ENCODE measurements at regions of chr15 and their contacts with region 1.

Region 1: DNA sequence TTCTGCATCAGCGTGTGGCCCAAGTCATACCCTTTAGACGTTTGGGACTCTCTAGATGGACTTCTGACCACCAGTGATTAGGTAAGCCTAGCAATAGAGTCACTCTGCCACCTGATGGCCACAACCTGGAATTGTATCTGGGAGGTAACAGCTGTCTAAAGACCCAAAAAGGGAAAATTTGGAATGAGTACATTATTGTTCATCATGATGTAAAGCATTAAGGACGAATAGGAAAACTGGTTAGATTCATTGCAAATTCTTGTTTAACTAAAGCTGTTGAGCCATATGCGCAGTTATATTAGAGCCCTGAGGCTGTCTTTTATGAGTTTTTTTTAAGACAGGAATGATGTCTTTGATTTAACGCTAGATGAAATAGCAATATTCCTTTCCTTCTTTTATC is 63.6 kb downstream of the FAM81A start:
- DNase-seq: no peak
- ATAC-seq: peak; percentile 89
- H3K4me3 ChIP-seq: no peak overlapping the region
- H3K27ac ChIP-seq: no peak overlapping the region
- H3K4me1 ChIP-seq: no peaks in the 10 kb centered on the region
- H3K27me3 ChIP-seq: no peaks in the 10 kb centered on the region
- CTCF ChIP-seq: peak; percentile 80 to 84 (median 81)
- EP300 ChIP-seq: no peak
- POLR2A ChIP-seq: no peak
- RAD21 ChIP-seq: peak; percentile 91

Region 2: GRCh38 chr15:58852347-58852746 is 649.2 kb before region 1 on chr15:
- CTCF ChIA-PET with region 1: no interaction called
- POLR2A ChIA-PET with region 1: no interaction called
- RAD21 ChIA-PET with region 1: no interaction called
- SMC1A ChIA-PET with region 1: no interaction called
- in situ Hi-C with region 1: no loop called
- intact Hi-C with region 1: no loop called
- DNase-seq: no peak
- ATAC-seq: no peak
- H3K4me3 ChIP-seq: no peak overlapping the region
- H3K27ac ChIP-seq: no peak overlapping the region
- H3K4me1 ChIP-seq: no peaks in the 10 kb centered on the region
- H3K27me3 ChIP-seq: no peaks in the 10 kb centered on the region
- CTCF ChIP-seq: no peak
- EP300 ChIP-seq: no peak
- POLR2A ChIP-seq: no peak
- RAD21 ChIP-seq: no peak

Region 3: GRCh38 chr15:58957101-58957973 is 544.3 kb before region 1 on chr15:
- CTCF ChIA-PET with region 1: interaction called, 25 read pairs
- POLR2A ChIA-PET with region 1: no interaction called
- RAD21 ChIA-PET with region 1: interaction called, 4 read pairs
- SMC1A ChIA-PET with region 1: interaction called, 12 read pairs
- in situ Hi-C with region 1: no loop called
- intact Hi-C with region 1: no loop called
- DNase-seq: no peak
- ATAC-seq: peak; percentile 98
- H3K4me3 ChIP-seq: no peak overlapping the region
- H3K27ac ChIP-seq: no peak overlapping the region
- H3K4me1 ChIP-seq: peaks cover 11% of the 10 kb centered on the region
- H3K27me3 ChIP-seq: no peaks in the 10 kb centered on the region
- CTCF ChIP-seq: peak; percentile 79 to 87 (median 81)
- EP300 ChIP-seq: no peak
- POLR2A ChIP-seq: no peak
- RAD21 ChIP-seq: peak; percentile 82

Region 4: GRCh38 chr15:59516655-59517461 is 15.3 kb after region 1 on chr15:
- CTCF ChIA-PET with region 1: interaction called, 40 read pairs
- POLR2A ChIA-PET with region 1: interaction called, 3 read pairs
- RAD21 ChIA-PET with region 1: interaction called, 15 read pairs
- SMC1A ChIA-PET with region 1: interaction called, 27 read pairs
- in situ Hi-C with region 1: no loop called
- intact Hi-C with region 1: no loop called
- DNase-seq: no peak
- ATAC-seq: peak; percentile 83
- H3K4me3 ChIP-seq: peak overlapping the region; percentile 35
- H3K27ac ChIP-seq: peak overlapping the region; percentile 93
- H3K4me1 ChIP-seq: peaks cover 27% of the 10 kb centered on the region
- H3K27me3 ChIP-seq: no peaks in the 10 kb centered on the region
- CTCF ChIP-seq: no peak
- EP300 ChIP-seq: no peak
- POLR2A ChIP-seq: no peak
- RAD21 ChIP-seq: no peak

Region 5: DNA sequence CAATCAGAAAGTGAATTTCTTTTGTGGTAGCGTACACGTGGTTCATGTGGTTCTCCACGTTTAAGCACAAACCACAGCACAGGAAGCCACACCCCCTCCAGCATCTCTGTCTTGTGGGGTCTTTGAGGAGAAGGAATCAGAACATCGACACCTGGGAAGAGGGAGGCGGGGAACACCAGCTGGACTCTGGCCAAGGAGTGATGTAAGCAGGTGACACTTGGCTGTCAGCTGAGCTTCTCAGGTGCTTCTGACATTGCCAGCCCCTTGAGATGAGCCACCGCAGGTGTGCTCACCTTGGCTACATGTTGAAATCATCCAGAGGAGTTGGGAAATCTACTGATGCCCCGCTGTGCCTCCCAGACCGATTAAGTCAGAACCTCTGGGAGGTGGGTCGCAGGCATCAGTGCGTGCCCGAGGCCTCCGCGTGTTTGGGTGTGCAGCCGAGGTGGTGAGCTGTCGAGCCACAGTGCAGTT is 21.4 kb after region 1 on chr15:
- CTCF ChIA-PET with region 1: interaction called, 58 read pairs
- POLR2A ChIA-PET with region 1: no interaction called
- RAD21 ChIA-PET with region 1: interaction called, 30 read pairs
- SMC1A ChIA-PET with region 1: interaction called, 49 read pairs
- in situ Hi-C with region 1: no loop called
- intact Hi-C with region 1: no loop called
- DNase-seq: no peak
- ATAC-seq: peak; percentile 41; the same call in 1 of the 3 replicates
- H3K4me3 ChIP-seq: no peak overlapping the region; the same call in 1 of the 2 replicates
- H3K27ac ChIP-seq: no peak overlapping the region
- H3K4me1 ChIP-seq: peaks cover 23% of the 10 kb centered on the region
- H3K27me3 ChIP-seq: no peaks in the 10 kb centered on the region
- CTCF ChIP-seq: no peak
- EP300 ChIP-seq: no peak
- POLR2A ChIP-seq: no peak
- RAD21 ChIP-seq: no peak

Region 6: GRCh38 chr15:59594493-59594942 is 92.9 kb after region 1 on chr15:
- CTCF ChIA-PET with region 1: no interaction called
- POLR2A ChIA-PET with region 1: no interaction called
- RAD21 ChIA-PET with region 1: no interaction called
- SMC1A ChIA-PET with region 1: no interaction called
- in situ Hi-C with region 1: no loop called
- intact Hi-C with region 1: no loop called
- DNase-seq: no peak
- ATAC-seq: no peak
- H3K4me3 ChIP-seq: no peak overlapping the region
- H3K27ac ChIP-seq: no peak overlapping the region
- H3K4me1 ChIP-seq: peaks cover 11% of the 10 kb centered on the region
- H3K27me3 ChIP-seq: no peaks in the 10 kb centered on the region
- CTCF ChIP-seq: no peak
- EP300 ChIP-seq: no peak
- POLR2A ChIP-seq: no peak
- RAD21 ChIP-seq: no peak

Measured in GM12878 (cell line).